WTC11 (cell line): ENCODE measurements at regions of chr17 and their contacts with region 1.

Region 1: DNA sequence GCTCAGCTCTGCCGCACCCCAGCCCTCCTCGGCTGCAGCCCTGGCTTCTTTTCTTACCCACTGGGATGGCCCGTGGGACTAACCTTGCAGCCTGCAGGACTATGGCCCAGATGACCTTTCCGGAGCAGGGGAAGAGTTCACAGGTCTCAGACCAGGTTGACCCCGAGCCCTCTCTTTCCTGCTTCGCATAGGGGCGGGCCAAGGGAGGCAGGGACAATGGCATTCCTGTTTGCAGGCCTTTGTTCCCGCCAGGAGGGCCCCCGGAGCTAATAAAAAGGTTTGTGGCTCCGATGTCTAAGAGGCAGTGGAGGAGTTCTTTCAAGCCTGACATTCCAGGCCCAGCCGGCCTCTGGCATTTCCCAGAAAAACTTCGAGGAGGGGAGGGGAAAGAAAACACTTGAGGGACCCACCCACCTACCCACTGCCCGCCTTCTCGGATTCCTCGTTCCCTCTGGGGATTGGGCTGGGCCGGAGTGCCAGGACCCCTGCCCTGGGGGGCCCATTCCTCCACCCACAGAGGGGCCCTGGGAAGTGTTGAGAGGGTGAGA is 5.8 kb upstream of the SOCS3 start:
- DNase-seq: peak; percentile 92
- ATAC-seq: peak; percentile 50
- H3K4me3 Mint-ChIP-seq: peak overlapping the region; percentile 46
- H3K27ac Mint-ChIP-seq: peak overlapping the region; percentile 97
- H3K4me1 Mint-ChIP-seq: peaks cover 87% of the 10 kb centered on the region
- H3K27me3 Mint-ChIP-seq: no peaks in the 10 kb centered on the region
- CTCF ChIP-seq: no peak

Region 2: DNA sequence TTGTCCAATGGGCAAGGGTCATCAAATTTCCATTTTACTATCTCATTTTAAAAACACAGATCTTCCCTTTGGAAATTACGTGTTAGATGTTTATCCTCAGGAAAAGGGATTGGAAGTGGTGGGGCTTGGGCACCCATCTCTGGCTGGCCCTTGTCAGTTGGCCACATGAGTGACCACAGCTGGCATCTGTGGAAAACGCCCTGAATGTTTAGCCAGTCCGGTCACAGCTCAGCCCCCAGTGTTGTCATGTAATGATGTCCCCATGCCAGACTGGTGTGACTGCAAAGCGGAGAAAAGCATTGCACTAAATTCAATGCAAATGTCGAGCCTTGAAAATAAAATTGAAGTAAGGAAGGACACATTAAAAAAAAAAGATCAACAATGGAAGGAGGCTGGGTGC is 290.1 kb before region 1 on chr17:
- CTCF ChIA-PET with region 1: no interaction called
- POLR2A ChIA-PET with region 1: no interaction called
- DNase-seq: no peak
- ATAC-seq: no peak
- H3K4me3 Mint-ChIP-seq: no peak overlapping the region
- H3K27ac Mint-ChIP-seq: no peak overlapping the region
- H3K4me1 Mint-ChIP-seq: no peaks in the 10 kb centered on the region
- H3K27me3 Mint-ChIP-seq: no peaks in the 10 kb centered on the region
- CTCF ChIP-seq: no peak

Region 3: DNA sequence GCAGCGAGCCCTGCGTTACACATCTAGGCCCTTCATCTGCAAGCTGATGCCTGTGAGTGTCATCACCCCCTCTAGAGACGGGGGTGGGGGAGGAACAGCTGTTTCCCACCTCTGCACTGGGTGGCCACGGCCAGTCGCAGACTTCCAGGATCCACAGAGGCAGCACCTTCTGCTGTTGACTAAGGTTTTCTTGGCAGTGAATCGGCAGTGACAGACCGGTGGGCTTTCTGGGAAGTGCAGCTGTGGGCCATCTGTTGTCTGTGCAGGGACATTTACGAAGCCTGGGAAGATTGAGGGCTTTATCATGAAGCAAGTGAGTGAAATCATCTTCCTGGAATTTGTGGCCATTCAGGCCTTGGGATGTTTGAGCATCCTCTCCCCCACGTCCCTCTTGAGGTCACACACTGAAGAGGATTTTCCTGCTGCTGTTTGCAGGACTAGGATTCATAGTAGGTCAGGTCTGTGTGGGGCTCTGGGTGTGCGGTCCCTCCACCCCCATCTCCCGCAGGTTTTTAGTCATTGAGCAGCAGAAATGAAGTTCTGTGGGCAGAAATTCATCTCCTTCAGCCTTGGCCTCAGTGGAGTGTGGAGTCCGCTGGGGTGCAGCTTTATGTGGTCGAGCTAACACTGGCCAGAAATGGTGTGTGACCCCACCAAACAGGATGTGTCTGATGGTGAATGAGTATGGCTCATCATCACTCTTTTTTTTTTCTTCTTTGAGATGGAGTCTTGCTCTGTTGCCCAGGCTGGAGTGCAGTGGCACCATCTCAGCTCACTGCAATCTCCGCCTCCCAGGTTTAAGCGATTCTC is 24.8 kb after region 1 on chr17:
- CTCF ChIA-PET with region 1: interaction called, 24 read pairs
- POLR2A ChIA-PET with region 1: interaction called, 9 read pairs
- DNase-seq: no peak
- ATAC-seq: peak; percentile 59
- H3K4me3 Mint-ChIP-seq: no peak overlapping the region
- H3K27ac Mint-ChIP-seq: peak overlapping the region; percentile 89
- H3K4me1 Mint-ChIP-seq: peaks cover 44% of the 10 kb centered on the region
- H3K27me3 Mint-ChIP-seq: no peaks in the 10 kb centered on the region
- CTCF ChIP-seq: 0 out of 2 replicates have a peak, but pooled peaks have one; percentile 14